Activated CD4-positive, alpha-beta T cell treated with anti-CD3 and anti-CD28 coated beads, Interleukin-2, amount 10 ng/mL, durations not matched to agents 24 days and 14 days (primary cell): ENCODE measurements at regions of chr2 and their contacts with region 1.

Region 1: GRCh38 chr2:62705007-62705829 is at the start of gene EHBP1:
- DNase-seq: peak; percentile 100
- H3K4me3 Mint-ChIP-seq: peak within 1 kb of the TSS; percentile 84
- H3K27ac Mint-ChIP-seq: peak within 1 kb of the TSS; percentile 46
- H3K4me1 Mint-ChIP-seq: peaks cover 27% of the 10 kb centered on the region
- H3K27me3 Mint-ChIP-seq: peaks cover 12% of the 10 kb centered on the region
- total RNA-seq, gene EHBP1: 23.9 and 27.4 TPM in 2 replicates

Region 2: GRCh38 chr2:61065715-61066709 is 1639.2 kb before region 1 on chr2 and contains the start of gene SANBR:
- intact Hi-C with region 1: loop called (anchors 5 kb)
- DNase-seq: peak; percentile 97
- H3K4me3 Mint-ChIP-seq: peak within 1 kb of the TSS; percentile 84
- H3K27ac Mint-ChIP-seq: peak within 1 kb of the TSS; percentile 80
- H3K4me1 Mint-ChIP-seq: peaks cover 8% of the 10 kb centered on the region
- H3K27me3 Mint-ChIP-seq: peaks cover 1% of the 10 kb centered on the region
- total RNA-seq, gene SANBR: 3.1 and 3.4 TPM in 2 replicates

Region 3: DNA sequence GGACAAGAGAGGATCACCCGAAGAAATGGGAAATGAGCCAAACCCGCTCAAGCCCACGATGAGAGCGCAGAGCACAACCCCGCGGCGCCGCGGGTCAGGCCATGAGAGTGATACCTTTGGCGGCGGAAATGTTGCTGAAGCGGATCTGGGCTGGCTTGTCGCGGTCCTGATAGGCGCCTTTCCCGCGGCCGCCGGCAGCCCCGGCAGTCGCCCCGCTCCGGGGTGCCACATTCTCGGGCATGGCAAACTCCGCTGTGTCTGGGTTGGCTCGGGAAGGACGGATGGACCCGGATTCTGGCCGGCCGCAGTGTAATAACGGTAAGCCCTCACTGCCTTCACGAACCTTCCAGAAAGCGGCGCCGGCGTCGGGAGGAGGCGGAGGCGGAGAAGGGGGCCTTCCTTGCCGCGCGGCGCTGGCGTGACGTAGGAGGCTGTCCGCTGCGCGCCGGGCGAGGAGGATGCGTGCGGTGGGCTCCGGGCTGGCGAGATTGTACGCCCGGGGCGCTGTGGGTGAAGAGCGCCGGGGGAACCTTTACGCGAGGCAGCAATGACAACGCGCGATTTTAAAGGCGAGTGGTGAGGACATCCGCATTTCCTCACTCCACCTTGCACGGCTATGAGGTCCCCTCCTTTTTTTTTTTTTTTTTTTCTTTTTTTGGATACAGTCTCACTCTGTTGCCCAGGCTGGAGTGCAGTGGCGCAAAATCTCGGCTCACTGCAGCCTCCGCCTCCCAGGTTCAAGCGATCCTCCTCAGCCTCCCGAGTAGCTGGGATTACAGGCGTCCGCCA is 816.8 kb before region 1 on chr2 and contains the start of gene CCT4:
- intact Hi-C with region 1: loop called (anchors 10 kb)
- DNase-seq: peak; percentile 97
- H3K4me3 Mint-ChIP-seq: peak within 1 kb of the TSS; percentile 99
- H3K27ac Mint-ChIP-seq: peak within 1 kb of the TSS; percentile 99
- H3K4me1 Mint-ChIP-seq: peaks cover 22% of the 10 kb centered on the region
- H3K27me3 Mint-ChIP-seq: no peaks in the 10 kb centered on the region
- total RNA-seq, gene CCT4: 398 and 407 TPM in 2 replicates

Region 4: GRCh38 chr2:62306751-62307468 is 398.3 kb before region 1 on chr2:
- intact Hi-C with region 1: loop called (anchors 10 kb)
- DNase-seq: peak; percentile 82
- H3K4me3 Mint-ChIP-seq: peak overlapping the region; percentile 60
- H3K27ac Mint-ChIP-seq: peak overlapping the region; percentile 94
- H3K4me1 Mint-ChIP-seq: peaks cover 71% of the 10 kb centered on the region
- H3K27me3 Mint-ChIP-seq: peaks cover 1% of the 10 kb centered on the region

Region 5: GRCh38 chr2:63050334-63051041 is 345.3 kb after region 1 on chr2 and contains the start of gene OTX1:
- intact Hi-C with region 1: loop called (anchors 10 kb)
- DNase-seq: peak; percentile 83
- H3K4me3 Mint-ChIP-seq: peak within 1 kb of the TSS; percentile 80
- H3K27ac Mint-ChIP-seq: peak within 1 kb of the TSS; percentile 79
- H3K4me1 Mint-ChIP-seq: peaks cover 32% of the 10 kb centered on the region
- H3K27me3 Mint-ChIP-seq: peaks cover 87% of the 10 kb centered on the region
- total RNA-seq, gene OTX1: not detected in 2 replicates

Region 6: DNA sequence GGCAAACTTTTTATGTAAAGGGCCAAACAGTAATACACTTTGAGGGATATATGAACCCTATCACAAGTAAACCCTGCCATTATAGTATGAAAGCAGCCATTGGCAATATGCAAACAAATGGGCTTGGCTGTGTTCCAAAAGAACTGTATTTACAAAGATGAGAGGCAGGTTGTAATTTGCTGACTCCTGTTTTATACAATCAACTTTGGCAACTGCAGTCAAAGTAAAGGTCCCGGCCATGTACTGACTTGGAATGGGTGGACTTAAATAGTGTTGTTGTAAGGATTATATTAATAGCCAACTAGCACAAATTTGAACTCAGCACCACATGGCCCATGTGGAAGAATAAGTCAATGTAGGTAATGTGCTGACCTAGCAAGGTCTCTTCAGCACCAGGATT is 659.6 kb after region 1 on chr2:
- intact Hi-C with region 1: no loop called
- DNase-seq: no peak
- H3K4me3 Mint-ChIP-seq: no peak overlapping the region
- H3K27ac Mint-ChIP-seq: no peak overlapping the region
- H3K4me1 Mint-ChIP-seq: peaks cover 3% of the 10 kb centered on the region
- H3K27me3 Mint-ChIP-seq: no peaks in the 10 kb centered on the region